Activated naive CD4-positive, alpha-beta T cell treated with anti-CD3 and anti-CD28 coated beads for 36 hours (primary cell): ENCODE measurements at regions of chr9 and their contacts with region 1.

Region 1: GRCh38 chr9:132800038-132800648 is 77.9 kb downstream of the AK8 start:
- DNase-seq: peak; percentile 77
- H3K4me3 Mint-ChIP-seq: no peak overlapping the region
- H3K27ac Mint-ChIP-seq: no peak overlapping the region
- H3K4me1 Mint-ChIP-seq: no peaks in the 10 kb centered on the region
- H3K27me3 Mint-ChIP-seq: peaks cover 16% of the 10 kb centered on the region

Region 2: GRCh38 chr9:132412089-132412488 is 388.1 kb before region 1 on chr9:
- CTCF ChIA-PET with region 1: interaction called, 4 read pairs
- intact Hi-C with region 1: loop called (anchors 1 kb)
- DNase-seq: peak; percentile 47
- H3K4me3 Mint-ChIP-seq: no peak overlapping the region
- H3K27ac Mint-ChIP-seq: no peak overlapping the region
- H3K4me1 Mint-ChIP-seq: peaks cover 23% of the 10 kb centered on the region
- H3K27me3 Mint-ChIP-seq: peaks cover 45% of the 10 kb centered on the region

Region 3: GRCh38 chr9:132486706-132487350 is 313.3 kb before region 1 on chr9:
- CTCF ChIA-PET with region 1: interaction called, 3 read pairs
- intact Hi-C with region 1: loop called (anchors 5 kb)
- DNase-seq: peak; percentile 71
- H3K4me3 Mint-ChIP-seq: peak overlapping the region; percentile 39
- H3K27ac Mint-ChIP-seq: peak overlapping the region; percentile 65
- H3K4me1 Mint-ChIP-seq: peaks cover 22% of the 10 kb centered on the region
- H3K27me3 Mint-ChIP-seq: peaks cover 48% of the 10 kb centered on the region

Region 4: GRCh38 chr9:132507746-132508469 is 292.2 kb before region 1 on chr9:
- CTCF ChIA-PET with region 1: interaction called, 4 read pairs
- intact Hi-C with region 1: loop called (anchors 1 kb)
- DNase-seq: peak; percentile 81
- H3K4me3 Mint-ChIP-seq: no peak overlapping the region
- H3K27ac Mint-ChIP-seq: no peak overlapping the region
- H3K4me1 Mint-ChIP-seq: peaks cover 2% of the 10 kb centered on the region
- H3K27me3 Mint-ChIP-seq: peaks cover 7% of the 10 kb centered on the region

Region 5: DNA sequence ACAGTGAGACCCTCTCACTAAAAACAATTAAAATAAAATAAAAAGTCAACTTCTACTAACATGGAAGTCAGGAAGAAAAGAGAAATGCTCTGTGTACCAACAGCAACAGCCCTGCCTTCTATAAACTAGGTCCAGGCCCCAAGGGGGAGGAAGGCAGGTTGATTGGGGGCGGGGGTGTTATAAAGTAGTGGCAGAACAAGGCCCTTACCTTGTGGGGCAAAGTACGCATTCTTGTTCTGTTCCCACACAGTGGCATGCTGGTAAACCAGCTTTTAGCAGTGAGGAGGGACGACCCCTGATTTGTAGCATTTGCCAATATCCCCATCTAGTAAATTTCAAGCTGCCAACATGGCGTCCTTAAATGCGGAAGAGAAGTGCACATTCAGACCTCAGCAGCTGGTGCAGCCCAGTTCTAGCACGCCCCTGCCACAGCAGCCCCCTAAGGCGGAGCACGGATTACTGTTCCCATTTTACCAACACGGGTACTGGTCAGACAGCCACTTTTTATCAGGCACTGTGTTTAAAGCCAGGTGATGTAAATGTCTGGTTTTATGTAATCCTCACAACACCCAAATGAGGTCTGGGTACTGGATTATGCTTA is 60.3 kb before region 1 on chr9:
- CTCF ChIA-PET with region 1: interaction called, 3 read pairs
- intact Hi-C with region 1: loop called (anchors 5 kb)
- DNase-seq: no peak
- H3K4me3 Mint-ChIP-seq: no peak overlapping the region
- H3K27ac Mint-ChIP-seq: no peak overlapping the region
- H3K4me1 Mint-ChIP-seq: peaks cover 2% of the 10 kb centered on the region
- H3K27me3 Mint-ChIP-seq: peaks cover 27% of the 10 kb centered on the region

Region 6: DNA sequence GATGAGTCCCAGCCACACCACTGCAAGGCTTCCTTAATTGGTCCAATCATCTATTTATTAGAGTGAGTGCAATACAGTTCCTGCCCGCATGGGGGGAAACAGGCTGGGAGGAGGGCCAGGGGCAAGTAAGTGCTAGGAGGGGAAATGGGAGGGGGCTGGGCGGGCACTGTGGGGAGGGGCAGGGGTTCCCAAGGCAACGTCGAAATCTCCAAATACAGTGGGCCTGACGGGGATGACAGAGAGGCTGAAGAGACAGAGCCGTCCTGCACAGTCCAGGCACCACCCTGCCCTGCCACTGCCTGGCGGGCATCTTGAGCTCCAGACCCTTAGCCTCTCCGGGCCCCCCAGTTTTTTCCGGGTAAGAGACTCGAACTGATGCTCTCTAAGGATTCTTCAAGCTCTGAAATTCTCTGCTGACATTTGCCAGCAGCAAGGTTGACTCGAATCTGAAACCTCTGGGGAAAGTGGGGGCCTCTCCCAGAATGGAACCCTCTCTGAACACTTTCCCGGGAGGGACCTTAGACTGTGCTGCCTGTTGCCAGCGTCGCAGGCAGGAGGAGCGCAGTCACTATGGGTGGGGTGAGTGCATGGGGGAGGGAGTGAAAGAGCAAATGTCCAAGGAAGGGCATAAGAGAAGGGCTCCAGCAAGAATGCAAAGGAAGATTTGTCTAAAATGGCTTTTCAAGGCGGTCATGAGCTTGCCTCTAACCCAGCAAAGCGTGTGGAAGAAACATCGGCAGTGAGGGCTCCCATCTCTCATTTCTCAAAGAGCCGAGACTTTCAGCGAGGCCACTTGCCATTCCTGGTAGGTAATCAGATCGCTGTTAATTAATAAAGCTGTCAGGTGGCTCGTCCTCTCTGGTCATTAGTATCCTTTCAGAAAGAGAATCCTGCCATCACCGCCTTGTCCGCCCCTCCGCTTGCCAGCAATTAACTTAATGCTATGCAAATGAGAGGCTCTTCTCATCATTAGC is 30.9 kb before region 1 on chr9:
- CTCF ChIA-PET with region 1: interaction called, 4 read pairs
- intact Hi-C with region 1: loop called (anchors 2 kb)
- DNase-seq: peak; percentile 80
- H3K4me3 Mint-ChIP-seq: peak overlapping the region; percentile 88
- H3K27ac Mint-ChIP-seq: peak overlapping the region; percentile 89
- H3K4me1 Mint-ChIP-seq: peaks cover 13% of the 10 kb centered on the region
- H3K27me3 Mint-ChIP-seq: no peaks in the 10 kb centered on the region

Region 7: DNA sequence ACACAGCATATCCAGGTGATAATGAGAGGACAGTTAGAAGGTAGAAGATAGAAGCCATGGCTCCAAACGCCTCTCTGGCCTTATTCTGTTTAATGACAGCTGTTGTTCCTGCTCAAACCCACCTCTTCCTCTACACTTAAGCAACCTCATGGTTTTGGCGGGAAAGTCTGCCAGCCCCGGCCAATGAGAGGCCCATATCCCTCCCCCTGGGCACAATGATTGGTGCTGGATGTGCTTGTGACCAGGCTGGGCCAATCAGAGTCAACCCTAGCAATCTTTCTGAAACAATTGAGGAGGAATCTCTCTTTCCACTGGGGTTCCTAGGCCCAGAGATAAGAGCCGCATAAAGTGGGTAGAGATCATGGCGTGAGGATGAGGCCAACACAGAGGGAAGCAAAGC is 173.6 kb after region 1 on chr9:
- CTCF ChIA-PET with region 1: no interaction called
- intact Hi-C with region 1: loop called (anchors 1 kb)
- DNase-seq: no peak
- H3K4me3 Mint-ChIP-seq: no peak overlapping the region
- H3K27ac Mint-ChIP-seq: no peak overlapping the region
- H3K4me1 Mint-ChIP-seq: peaks cover 4% of the 10 kb centered on the region
- H3K27me3 Mint-ChIP-seq: peaks cover 7% of the 10 kb centered on the region